HCT116 (cell line): ENCODE measurements at regions of chr1 and their contacts with region 1.

Region 1: DNA sequence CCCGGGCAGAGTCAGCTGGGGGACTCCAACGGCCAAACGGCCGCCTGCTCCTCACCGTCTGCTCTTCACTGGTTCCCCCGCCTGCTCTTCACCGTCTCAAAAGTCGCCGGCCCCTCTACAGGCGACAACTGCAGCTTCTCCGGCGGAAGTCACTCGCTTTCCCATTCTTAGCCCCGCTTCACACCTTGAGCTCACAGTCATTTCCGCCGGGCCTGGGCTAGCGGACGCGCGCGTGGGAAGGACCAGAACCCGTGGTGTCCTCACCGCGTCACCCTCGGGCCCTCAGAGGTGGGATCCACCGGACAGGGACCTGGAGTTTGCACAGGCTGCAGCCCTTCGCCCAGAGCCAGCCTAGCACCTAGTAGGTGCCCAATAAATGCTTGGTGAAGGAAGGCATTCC is 27.9 kb upstream of the HJV start:
- DNase-seq: no peak
- ATAC-seq: no peak
- H3K4me3 ChIP-seq: no peak overlapping the region
- H3K27ac ChIP-seq: no peak overlapping the region
- H3K4me1 ChIP-seq: peaks cover 3 to 19% of the 10 kb centered on the region in 2 experiments; a peak in 3 of 4 replicates
- H3K27me3 ChIP-seq: no peaks in the 10 kb centered on the region
- CTCF ChIP-seq: no peak
- POLR2A ChIP-seq: no peak
- RAD21 ChIP-seq: no peak

Region 2: DNA sequence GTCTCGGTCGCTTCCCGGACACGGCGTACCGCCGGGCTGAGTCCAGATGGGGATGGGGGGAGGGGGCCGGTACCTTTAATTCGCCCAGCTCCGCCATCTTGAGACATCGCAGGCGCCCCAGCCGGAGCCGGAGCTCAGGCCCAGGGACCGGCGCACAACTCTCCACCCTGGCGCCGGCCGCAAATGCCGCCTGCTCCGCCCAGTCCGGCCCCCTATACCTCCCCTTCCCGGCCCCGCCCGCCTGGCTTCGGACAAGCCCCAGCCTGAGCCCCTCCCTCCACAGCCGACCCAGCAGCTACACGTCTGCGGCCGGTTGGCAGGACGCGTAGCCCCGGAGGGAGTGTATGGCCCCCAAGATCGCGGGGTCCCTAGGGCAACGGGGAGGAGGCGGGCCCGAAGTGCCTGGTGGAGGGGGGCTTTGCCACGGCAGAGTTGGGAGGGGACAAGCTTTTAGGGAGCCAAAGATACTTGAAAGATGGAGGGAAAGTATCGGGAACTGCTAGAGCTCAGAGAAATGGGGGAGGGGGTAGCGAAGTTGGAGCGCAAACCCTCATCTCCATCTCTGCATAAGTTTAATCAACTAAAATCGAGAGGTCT is 190.4 kb before region 1 on chr1 and contains the start of gene PIAS3:
- CTCF ChIA-PET with region 1: no interaction called
- POLR2A ChIA-PET with region 1: interaction called, 22 read pairs
- RAD21 ChIA-PET with region 1: no interaction called
- intact Hi-C with region 1: no loop called
- DNase-seq: peak; percentile 82
- ATAC-seq: peak; percentile 87
- H3K4me3 ChIP-seq: peak within 1 kb of the TSS; percentile 73 to 75
- H3K27ac ChIP-seq: peak within 1 kb of the TSS; percentile 71
- H3K4me1 ChIP-seq: peaks cover 11 to 15% of the 10 kb centered on the region in 2 experiments; a peak in 3 of 4 replicates
- H3K27me3 ChIP-seq: no peaks in the 10 kb centered on the region
- CTCF ChIP-seq: no peak
- POLR2A ChIP-seq: peak; percentile 13
- RAD21 ChIP-seq: no peak
- total RNA-seq, gene PIAS3: 31.2 TPM

Region 3: GRCh38 chr1:145885738-145886287 is 163.6 kb before region 1 on chr1 and contains the start of gene ANKRD35:
- CTCF ChIA-PET with region 1: no interaction called
- POLR2A ChIA-PET with region 1: no interaction called
- RAD21 ChIA-PET with region 1: no interaction called
- intact Hi-C with region 1: no loop called
- DNase-seq: peak; percentile 22
- ATAC-seq: peak; percentile 99
- H3K4me3 ChIP-seq: peak within 1 kb of the TSS; percentile 22 to 46; a peak in 3 of 4 replicates
- H3K27ac ChIP-seq: no peak within 1 kb of the TSS
- H3K4me1 ChIP-seq: peaks cover 6 to 22% of the 10 kb centered on the region in 2 experiments
- H3K27me3 ChIP-seq: peaks cover 7% of the 10 kb centered on the region; the same call in 1 of the 2 replicates
- CTCF ChIP-seq: no peak
- POLR2A ChIP-seq: no peak
- RAD21 ChIP-seq: no peak
- total RNA-seq, gene ANKRD35: not detected

Region 4: GRCh38 chr1:145918144-145918992 is 131.1 kb before region 1 on chr1 and contains the start of gene PEX11B:
- CTCF ChIA-PET with region 1: no interaction called
- POLR2A ChIA-PET with region 1: no interaction called
- RAD21 ChIA-PET with region 1: no interaction called
- intact Hi-C with region 1: no loop called
- DNase-seq: peak; percentile 75
- ATAC-seq: peak; percentile 84
- H3K4me3 ChIP-seq: peak within 1 kb of the TSS; percentile 74 to 95
- H3K27ac ChIP-seq: peak within 1 kb of the TSS; percentile 62
- H3K4me1 ChIP-seq: peaks cover 9 to 25% of the 10 kb centered on the region in 2 experiments; a peak in 3 of 4 replicates
- H3K27me3 ChIP-seq: no peaks in the 10 kb centered on the region
- CTCF ChIP-seq: no peak
- POLR2A ChIP-seq: no peak
- RAD21 ChIP-seq: no peak
- total RNA-seq, gene PEX11B: 20.9 TPM

Region 5: DNA sequence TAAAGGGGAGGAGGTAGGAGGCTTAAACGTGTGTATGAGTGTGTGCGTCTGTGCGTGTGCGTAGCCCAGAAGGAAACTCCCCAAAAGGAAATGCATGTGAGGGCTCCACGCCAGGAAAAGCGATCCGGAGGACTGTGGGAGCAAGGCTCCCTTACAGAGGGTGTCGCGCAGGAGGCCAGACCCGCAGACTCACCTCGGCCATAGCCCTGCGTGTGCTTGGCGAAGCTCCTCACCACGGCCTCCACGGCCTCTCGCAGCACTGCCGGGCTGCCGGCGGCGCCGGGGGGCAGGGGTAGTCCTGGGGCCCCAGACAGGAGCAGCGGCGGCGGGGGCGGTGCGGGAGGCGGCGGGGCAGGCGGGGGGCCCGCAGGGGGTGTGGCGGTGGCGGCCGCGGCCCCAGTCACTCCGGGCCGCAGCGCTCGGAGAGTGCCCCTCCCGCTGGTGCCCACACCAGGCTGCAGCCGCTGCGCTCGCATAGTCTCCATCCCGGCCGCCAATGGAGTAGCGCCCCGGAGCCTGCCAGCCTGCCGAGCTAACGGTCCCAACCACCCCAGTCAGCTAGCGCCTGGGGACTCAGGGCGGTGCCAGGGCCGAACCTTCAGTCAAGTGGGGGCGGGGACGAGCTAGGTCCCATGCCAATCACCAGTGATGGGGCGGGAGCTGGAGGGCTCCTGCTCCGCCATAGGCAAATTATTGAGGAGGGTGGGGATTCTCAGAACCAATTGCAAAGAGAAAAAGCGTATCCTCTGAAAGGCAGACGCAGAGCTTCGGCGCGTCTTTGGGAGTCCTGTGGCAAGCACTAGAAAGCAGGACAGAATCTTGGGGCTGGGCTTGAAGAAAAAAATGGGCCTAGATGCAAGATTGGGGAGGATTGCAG is 91.8 kb before region 1 on chr1 and contains the start of gene LIX1L:
- CTCF ChIA-PET with region 1: no interaction called
- POLR2A ChIA-PET with region 1: interaction called, 16 read pairs
- RAD21 ChIA-PET with region 1: no interaction called
- intact Hi-C with region 1: no loop called
- DNase-seq: peak; percentile 90
- ATAC-seq: peak; percentile 96
- H3K4me3 ChIP-seq: peak within 1 kb of the TSS; percentile 59 to 67
- H3K27ac ChIP-seq: peak within 1 kb of the TSS; percentile 63
- H3K4me1 ChIP-seq: peaks cover 14 to 28% of the 10 kb centered on the region in 2 experiments
- H3K27me3 ChIP-seq: no peaks in the 10 kb centered on the region
- CTCF ChIP-seq: no peak
- POLR2A ChIP-seq: peak; percentile 58
- RAD21 ChIP-seq: no peak
- total RNA-seq, gene LIX1L: 12.4 TPM

Region 6: DNA sequence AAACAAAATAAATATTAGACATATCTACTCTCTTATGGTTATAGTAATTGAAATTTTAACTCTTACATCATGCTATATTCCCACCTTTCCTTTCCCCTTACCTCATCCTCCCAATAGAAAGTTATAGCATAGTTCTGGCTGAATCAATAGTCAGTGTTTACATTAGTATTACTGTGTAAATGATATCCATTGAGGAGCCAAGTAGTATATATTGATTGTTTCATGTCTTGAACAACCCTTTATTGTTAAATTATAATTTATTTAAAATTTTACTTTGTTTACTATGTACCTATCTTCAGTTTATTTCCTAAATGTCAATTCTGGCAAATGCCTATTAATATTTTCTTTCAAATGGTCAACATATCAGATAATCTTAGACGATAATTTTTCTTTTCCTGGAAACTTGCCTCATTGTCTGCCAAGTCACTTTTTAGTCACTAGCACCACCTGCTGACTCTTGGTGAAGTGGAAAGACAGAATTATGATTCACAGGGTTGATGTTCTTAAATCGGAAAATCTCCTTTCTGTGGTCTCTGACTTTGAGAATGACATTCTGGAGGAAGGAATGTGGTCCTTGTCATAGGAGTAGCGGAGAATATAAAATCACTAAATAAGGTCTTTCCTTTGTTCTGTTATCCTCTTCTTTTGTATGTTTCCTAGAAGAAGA is 36.6 kb before region 1 on chr1:
- CTCF ChIA-PET with region 1: no interaction called
- POLR2A ChIA-PET with region 1: no interaction called
- RAD21 ChIA-PET with region 1: no interaction called
- intact Hi-C with region 1: no loop called
- DNase-seq: peak; percentile 83
- ATAC-seq: peak; percentile 84
- H3K4me3 ChIP-seq: no peak overlapping the region
- H3K27ac ChIP-seq: no peak overlapping the region
- H3K4me1 ChIP-seq: peaks cover 0 to 5% of the 10 kb centered on the region in 2 experiments; a peak in 2 of 4 replicates
- H3K27me3 ChIP-seq: no peaks in the 10 kb centered on the region
- CTCF ChIP-seq: peak; percentile 58 to 95 (median 86)
- POLR2A ChIP-seq: no peak
- RAD21 ChIP-seq: peak; percentile 97

Region 7: DNA sequence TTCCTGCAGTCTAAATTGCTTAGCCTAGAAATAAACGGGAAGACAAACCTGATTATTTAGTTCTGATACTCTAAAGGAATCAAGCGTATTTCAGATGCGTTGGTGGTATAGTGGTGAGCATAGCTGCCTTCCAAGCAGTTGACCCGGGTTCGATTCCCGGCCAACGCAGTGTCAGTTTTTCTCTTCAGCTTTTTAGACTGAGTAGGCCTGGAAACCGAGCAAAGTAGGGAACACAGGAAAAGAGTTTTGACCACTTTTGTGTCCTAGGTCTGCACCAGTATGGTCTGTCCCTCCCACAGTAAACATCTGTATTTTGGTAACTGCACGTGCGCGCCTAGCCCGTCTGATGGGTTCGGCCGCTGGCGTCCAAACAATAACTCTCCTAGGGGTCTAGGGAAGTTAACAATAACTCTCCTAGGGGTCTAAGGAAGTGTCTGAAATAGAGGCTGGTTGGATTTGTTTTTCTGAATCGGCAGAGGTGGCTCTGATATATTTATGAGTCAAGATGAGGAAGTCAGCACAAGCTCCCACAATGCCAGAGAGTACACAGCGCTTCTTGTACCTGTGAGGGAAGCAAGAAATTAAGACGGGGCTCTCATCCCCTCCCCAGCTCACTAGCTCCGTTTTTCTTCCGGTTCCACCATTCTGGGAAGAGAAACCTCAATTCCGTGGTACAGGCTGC is 12.3 kb before region 1 on chr1:
- CTCF ChIA-PET with region 1: interaction called, 6 read pairs
- POLR2A ChIA-PET with region 1: interaction called, 215 read pairs
- RAD21 ChIA-PET with region 1: no interaction called
- intact Hi-C with region 1: no loop called
- DNase-seq: peak; percentile 75
- ATAC-seq: peak; percentile 39
- H3K4me3 ChIP-seq: peak overlapping the region; percentile 46 to 57
- H3K27ac ChIP-seq: peak overlapping the region; percentile 67
- H3K4me1 ChIP-seq: peaks cover 15 to 48% of the 10 kb centered on the region in 2 experiments
- H3K27me3 ChIP-seq: no peaks in the 10 kb centered on the region
- CTCF ChIP-seq: no peak
- POLR2A ChIP-seq: no peak
- RAD21 ChIP-seq: no peak